ENCODE measurements at regions of chr19 and their contacts with region 1.

Region 1: DNA sequence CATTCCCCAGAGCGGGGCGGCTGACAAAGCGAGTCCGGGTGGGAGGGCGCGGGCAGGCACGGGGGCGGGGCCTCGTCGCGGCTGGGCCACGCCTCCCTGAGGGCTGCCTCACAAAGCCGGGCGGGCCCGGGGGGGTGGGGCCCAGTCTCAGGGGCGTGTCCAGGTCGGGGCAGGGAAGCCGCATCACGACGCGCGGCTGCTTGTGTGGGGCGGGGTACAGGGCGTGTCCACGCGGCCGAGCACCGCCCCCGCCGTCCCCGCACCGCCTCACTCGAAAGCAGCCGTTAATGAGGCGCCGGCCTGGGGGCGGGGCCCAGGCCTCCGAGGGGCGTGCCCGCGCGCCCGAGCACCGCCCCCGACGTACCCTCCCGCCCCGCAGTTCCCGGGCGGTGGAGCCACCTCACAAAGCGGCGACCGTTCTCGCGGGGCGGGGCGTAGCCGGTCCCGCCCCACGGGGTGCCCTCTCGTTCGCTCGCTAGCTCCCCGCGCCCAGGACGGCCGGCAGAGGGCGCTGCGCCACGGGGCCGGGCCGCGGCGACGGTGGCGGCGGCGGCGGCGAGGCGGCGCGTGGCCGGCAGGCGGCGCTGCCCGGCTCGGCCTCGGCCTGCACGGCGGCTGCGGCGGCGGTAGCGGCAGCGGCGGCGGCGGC is at the start of gene CARM1:
- DNase-seq: peak; percentile 99
- ATAC-seq: peak; percentile 90
- H3K4me3 Mint-ChIP-seq: peak within 1 kb of the TSS; percentile 90
- H3K27ac Mint-ChIP-seq: peak within 1 kb of the TSS; percentile 93
- H3K4me1 Mint-ChIP-seq: peaks cover 23% of the 10 kb centered on the region
- H3K27me3 Mint-ChIP-seq: no peaks in the 10 kb centered on the region; the same call in 1 of the 2 replicates
- CTCF ChIP-seq: peak; percentile 56
- total RNA-seq, gene CARM1: 125 to 126 TPM (median 126 TPM) in 3 replicates

Region 2: DNA sequence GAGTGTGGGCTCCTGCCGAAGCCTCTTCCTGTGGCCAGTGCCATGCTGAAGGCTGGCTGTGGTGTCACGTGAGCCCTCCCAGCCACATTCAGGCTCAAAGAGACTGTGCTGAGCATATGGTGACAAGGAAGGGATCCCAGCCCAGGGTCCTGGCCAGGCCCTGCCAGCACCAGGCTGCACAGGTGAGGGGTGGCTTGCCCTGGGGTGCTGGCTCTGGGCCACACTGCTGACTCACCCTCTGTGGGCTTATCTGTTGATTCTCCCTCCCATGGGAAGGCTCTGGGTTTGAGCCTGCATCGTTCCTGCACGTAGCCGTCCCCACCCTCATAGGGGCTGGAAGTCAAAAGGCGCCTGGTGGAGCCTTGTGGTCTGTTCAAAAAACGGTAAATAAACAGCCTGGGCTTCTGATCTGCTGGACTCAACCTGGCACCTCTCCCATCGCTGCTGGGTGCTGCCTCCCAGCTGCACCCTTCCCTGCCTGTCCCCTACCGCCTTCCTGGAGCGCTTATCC is 122.1 kb before region 1 on chr19:
- CTCF ChIA-PET with region 1: no interaction called
- POLR2A ChIA-PET with region 1: no interaction called
- DNase-seq: no peak
- ATAC-seq: no peak
- H3K4me3 Mint-ChIP-seq: no peak overlapping the region
- H3K27ac Mint-ChIP-seq: peak overlapping the region; percentile 95
- H3K4me1 Mint-ChIP-seq: peaks cover 27% of the 10 kb centered on the region
- H3K27me3 Mint-ChIP-seq: no peaks in the 10 kb centered on the region
- CTCF ChIP-seq: no peak

Region 3: DNA sequence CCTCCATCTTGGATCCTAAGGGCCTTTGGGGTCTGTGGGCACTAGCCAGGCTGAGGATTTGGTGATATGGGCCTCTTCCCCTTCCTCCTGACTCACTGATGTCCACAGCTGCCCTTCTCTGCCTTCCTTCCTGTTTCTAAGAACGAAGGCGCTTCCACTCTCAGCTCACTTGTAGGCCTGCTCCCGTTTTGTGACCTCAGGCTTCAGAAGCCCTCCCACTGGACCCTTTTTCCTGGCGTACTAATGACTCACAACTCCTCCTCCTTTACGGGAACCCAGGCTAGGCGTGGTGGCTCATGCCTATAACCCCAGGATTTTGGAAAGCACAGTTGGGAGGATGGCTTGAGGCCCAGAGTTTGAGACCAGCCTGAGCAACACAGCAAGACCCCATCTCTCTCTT is 90.7 kb before region 1 on chr19:
- CTCF ChIA-PET with region 1: no interaction called
- POLR2A ChIA-PET with region 1: no interaction called
- DNase-seq: no peak
- ATAC-seq: no peak
- H3K4me3 Mint-ChIP-seq: no peak overlapping the region
- H3K27ac Mint-ChIP-seq: peak overlapping the region; percentile 63
- H3K4me1 Mint-ChIP-seq: no peaks in the 10 kb centered on the region
- H3K27me3 Mint-ChIP-seq: no peaks in the 10 kb centered on the region
- CTCF ChIP-seq: no peak

Region 4: GRCh38 chr19:10835754-10836477 is 35.2 kb before region 1 on chr19 and contains the start of gene TMED1:
- CTCF ChIA-PET with region 1: interaction called, 27 read pairs
- POLR2A ChIA-PET with region 1: interaction called, 3 read pairs
- DNase-seq: peak; percentile 100
- ATAC-seq: peak; percentile 93
- H3K4me3 Mint-ChIP-seq: peak within 1 kb of the TSS; percentile 85
- H3K27ac Mint-ChIP-seq: peak within 1 kb of the TSS; percentile 100
- H3K4me1 Mint-ChIP-seq: peaks cover 13% of the 10 kb centered on the region
- H3K27me3 Mint-ChIP-seq: peaks cover 24% of the 10 kb centered on the region
- CTCF ChIP-seq: peak; percentile 36; the same call in 1 of the 2 replicates
- total RNA-seq, gene TMED1: 28.5 to 40.9 TPM (median 40.6 TPM) in 3 replicates

Region 5: DNA sequence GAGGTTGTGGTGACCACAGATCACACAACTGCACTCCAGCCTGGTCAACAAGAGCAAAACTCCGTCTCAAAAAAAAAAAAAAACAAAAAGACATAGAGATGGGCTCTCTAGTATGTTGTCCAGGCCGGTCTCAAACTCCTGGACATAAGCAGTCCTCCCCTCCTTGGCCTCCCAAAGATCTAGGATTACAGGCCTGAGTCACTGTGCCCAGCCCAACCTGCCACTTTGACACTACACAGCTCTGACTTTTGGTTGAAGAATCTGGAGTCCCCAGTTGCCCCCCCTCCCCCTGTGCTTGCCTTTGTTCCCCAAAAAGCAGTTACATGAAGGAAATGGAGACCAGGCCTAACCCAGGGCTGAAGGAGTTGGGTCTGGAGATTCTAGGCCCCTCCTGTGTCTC is 13.2 kb after region 1 on chr19:
- CTCF ChIA-PET with region 1: interaction called, 62 read pairs
- POLR2A ChIA-PET with region 1: interaction called, 12 read pairs
- DNase-seq: no peak
- ATAC-seq: no peak
- H3K4me3 Mint-ChIP-seq: no peak overlapping the region
- H3K27ac Mint-ChIP-seq: no peak overlapping the region
- H3K4me1 Mint-ChIP-seq: peaks cover 73% of the 10 kb centered on the region
- H3K27me3 Mint-ChIP-seq: no peaks in the 10 kb centered on the region
- CTCF ChIP-seq: no peak

Region 6: GRCh38 chr19:10891405-10892086 is 20.5 kb after region 1 on chr19:
- CTCF ChIA-PET with region 1: interaction called, 62 read pairs
- POLR2A ChIA-PET with region 1: interaction called, 12 read pairs
- DNase-seq: no peak
- ATAC-seq: peak; percentile 6; the same call in 1 of the 2 replicates
- H3K4me3 Mint-ChIP-seq: peak overlapping the region; percentile 20
- H3K27ac Mint-ChIP-seq: peak overlapping the region; percentile 94
- H3K4me1 Mint-ChIP-seq: peaks cover 70% of the 10 kb centered on the region
- H3K27me3 Mint-ChIP-seq: no peaks in the 10 kb centered on the region
- CTCF ChIP-seq: no peak

Region 7: GRCh38 chr19:10899151-10899653 is 28.1 kb after region 1 on chr19:
- CTCF ChIA-PET with region 1: interaction called, 14 read pairs
- POLR2A ChIA-PET with region 1: no interaction called
- DNase-seq: no peak
- ATAC-seq: no peak
- H3K4me3 Mint-ChIP-seq: no peak overlapping the region
- H3K27ac Mint-ChIP-seq: no peak overlapping the region
- H3K4me1 Mint-ChIP-seq: peaks cover 26% of the 10 kb centered on the region
- H3K27me3 Mint-ChIP-seq: no peaks in the 10 kb centered on the region
- CTCF ChIP-seq: no peak